ENCODE measurements at regions of chrX and their contacts with region 1.

Region 1: DNA sequence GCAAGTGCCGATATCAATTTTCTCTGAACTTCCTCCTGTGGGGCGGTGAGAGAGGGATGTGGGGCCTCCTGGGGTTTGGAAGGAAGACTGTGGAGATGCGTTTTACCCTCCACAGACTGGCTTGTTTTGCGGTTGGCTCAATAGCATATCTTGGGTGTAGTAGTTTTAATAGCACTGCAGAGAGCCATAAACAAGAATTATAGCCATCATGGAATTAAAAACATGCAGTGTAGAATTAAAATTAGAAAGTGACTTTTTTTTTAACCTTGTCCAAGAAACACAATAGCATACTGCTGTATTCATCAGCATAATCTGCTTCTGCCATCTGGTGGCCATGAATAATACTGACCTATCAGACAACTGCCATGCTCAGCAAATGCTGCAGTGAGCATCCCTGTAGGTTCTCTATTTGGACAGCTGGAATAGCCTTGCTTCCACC is 47.3 kb upstream of the SCML1 start:
- DNase-seq: peak; percentile 31 to 63
- H3K4me3 ChIP-seq: no peak overlapping the region
- H3K27ac ChIP-seq: no peak overlapping the region
- H3K4me1 ChIP-seq: 0 out of 2 replicates have a peak, but pooled peaks cover 6% of the 10 kb centered on the region
- H3K27me3 ChIP-seq: no peaks in the 10 kb centered on the region
- CTCF ChIP-seq: peak; percentile 82

Region 2: DNA sequence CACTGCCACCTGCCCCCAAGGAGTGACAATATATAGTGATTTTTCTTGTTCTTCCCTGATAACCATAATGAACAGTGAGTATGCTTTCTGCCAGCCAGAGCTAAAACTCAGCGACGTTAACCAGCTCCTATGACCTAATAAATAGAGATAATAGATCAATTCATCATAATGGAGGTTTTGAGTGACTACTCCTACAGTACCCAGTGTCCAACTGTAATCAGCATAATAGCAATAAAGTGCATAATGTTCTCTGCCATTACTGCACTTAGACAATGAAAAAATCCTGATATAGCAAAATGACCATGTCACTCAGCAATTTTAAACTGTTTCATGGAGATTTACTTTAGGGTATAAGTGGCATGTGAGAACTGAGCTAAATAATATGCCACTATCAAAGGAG is 924.4 kb before region 1 on chrX:
- CTCF ChIA-PET with region 1: no interaction called
- POLR2A ChIA-PET with region 1: no interaction called
- intact Hi-C with region 1: no loop called
- DNase-seq: no peak
- H3K4me3 ChIP-seq: no peak overlapping the region
- H3K27ac ChIP-seq: no peak overlapping the region
- H3K4me1 ChIP-seq: 0 out of 2 replicates have a peak, but pooled peaks cover 1% of the 10 kb centered on the region
- H3K27me3 ChIP-seq: no peaks in the 10 kb centered on the region
- CTCF ChIP-seq: no peak

Region 3: GRCh38 chrX:16826207-16826606 is 863.8 kb before region 1 on chrX:
- CTCF ChIA-PET with region 1: interaction called, 4 read pairs
- POLR2A ChIA-PET with region 1: no interaction called
- intact Hi-C with region 1: loop called (anchors 10 kb)
- DNase-seq: peak in 1 of 2 experiments; percentile 46
- H3K4me3 ChIP-seq: no peak overlapping the region
- H3K27ac ChIP-seq: no peak overlapping the region
- H3K4me1 ChIP-seq: no peaks in the 10 kb centered on the region; the same call in 1 of the 2 replicates
- H3K27me3 ChIP-seq: no peaks in the 10 kb centered on the region
- CTCF ChIP-seq: peak; percentile 67

Region 4: GRCh38 chrX:17120816-17121215 is 569.2 kb before region 1 on chrX:
- CTCF ChIA-PET with region 1: no interaction called
- POLR2A ChIA-PET with region 1: no interaction called
- intact Hi-C with region 1: loop called (anchors 1 kb)
- DNase-seq: no peak
- H3K4me3 ChIP-seq: no peak overlapping the region
- H3K27ac ChIP-seq: no peak overlapping the region
- H3K4me1 ChIP-seq: no peaks in the 10 kb centered on the region
- H3K27me3 ChIP-seq: no peaks in the 10 kb centered on the region
- CTCF ChIP-seq: no peak

Region 5: GRCh38 chrX:17160971-17161370 is 529.0 kb before region 1 on chrX:
- CTCF ChIA-PET with region 1: no interaction called
- POLR2A ChIA-PET with region 1: no interaction called
- intact Hi-C with region 1: loop called (anchors 2 kb)
- DNase-seq: peak in 1 of 2 experiments; percentile 38
- H3K4me3 ChIP-seq: no peak overlapping the region
- H3K27ac ChIP-seq: no peak overlapping the region
- H3K4me1 ChIP-seq: no peaks in the 10 kb centered on the region
- H3K27me3 ChIP-seq: no peaks in the 10 kb centered on the region
- CTCF ChIP-seq: peak; percentile 55

Region 6: GRCh38 chrX:17242470-17242869 is 447.5 kb before region 1 on chrX:
- CTCF ChIA-PET with region 1: interaction called, 5 read pairs
- POLR2A ChIA-PET with region 1: no interaction called
- intact Hi-C with region 1: loop called (anchors 1 kb)
- DNase-seq: peak; percentile 28 to 35
- H3K4me3 ChIP-seq: no peak overlapping the region
- H3K27ac ChIP-seq: no peak overlapping the region
- H3K4me1 ChIP-seq: no peaks in the 10 kb centered on the region
- H3K27me3 ChIP-seq: no peaks in the 10 kb centered on the region
- CTCF ChIP-seq: peak; percentile 82

Region 7: DNA sequence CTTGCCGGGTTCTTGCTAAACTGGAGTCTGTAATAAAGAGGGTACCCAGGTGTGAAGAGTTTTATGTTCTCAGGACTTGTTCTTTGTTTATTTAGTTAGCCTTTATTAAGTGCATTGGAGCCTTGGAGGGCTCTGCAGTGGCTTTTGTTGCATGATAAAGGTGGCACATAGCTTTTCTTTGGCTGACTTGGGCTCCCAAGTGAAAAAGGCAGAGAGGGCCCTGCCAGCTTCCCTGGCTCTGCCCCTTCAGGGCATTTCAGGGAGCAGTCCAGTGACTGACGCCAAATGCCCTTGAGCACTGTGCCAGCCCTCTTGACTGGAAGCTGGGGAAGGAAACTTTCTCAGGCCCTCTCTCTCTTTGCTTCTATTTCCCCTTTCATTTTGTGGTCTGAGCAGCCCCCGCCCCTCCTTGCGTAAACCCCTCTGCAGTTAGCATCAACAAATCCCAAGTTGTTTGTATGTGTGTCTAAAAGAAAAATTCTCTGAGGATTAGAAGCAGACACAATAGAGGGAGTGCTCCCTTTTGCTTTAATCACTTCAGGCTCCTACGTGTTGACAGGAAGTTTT is 162.8 kb before region 1 on chrX:
- CTCF ChIA-PET with region 1: no interaction called
- POLR2A ChIA-PET with region 1: no interaction called
- intact Hi-C with region 1: loop called (anchors 5 kb)
- DNase-seq: peak; percentile 67 to 85
- H3K4me3 ChIP-seq: no peak overlapping the region; the same call in 1 of the 2 replicates
- H3K27ac ChIP-seq: peak overlapping the region; percentile 88
- H3K4me1 ChIP-seq: peaks cover 46% of the 10 kb centered on the region
- H3K27me3 ChIP-seq: no peaks in the 10 kb centered on the region
- CTCF ChIP-seq: no peak

Region 8: GRCh38 chrX:17590892-17591740 is 98.9 kb before region 1 on chrX:
- CTCF ChIA-PET with region 1: no interaction called
- POLR2A ChIA-PET with region 1: no interaction called
- intact Hi-C with region 1: loop called (anchors 1 kb)
- DNase-seq: peak; percentile 58 to 72
- H3K4me3 ChIP-seq: no peak overlapping the region; the same call in 1 of the 2 replicates
- H3K27ac ChIP-seq: peak overlapping the region; percentile 82
- H3K4me1 ChIP-seq: peaks cover 57% of the 10 kb centered on the region
- H3K27me3 ChIP-seq: no peaks in the 10 kb centered on the region
- CTCF ChIP-seq: peak; percentile 85